Dendritic cell treated with granulocyte-macrophage colony-stimulating factor and Interleukin-4, amounts not matched to agents 40 ng/mL and 50 ng/mL, for 4 days (primary cell): ENCODE measurements at regions of chr2 and their contacts with region 1.

Region 1: GRCh38 chr2:32291746-32292145 is 14.0 kb downstream of the YIPF4 start:
- H3K4me3 Mint-ChIP-seq: no peak overlapping the region
- H3K27ac Mint-ChIP-seq: no peak overlapping the region
- H3K4me1 Mint-ChIP-seq: peaks cover 20% of the 10 kb centered on the region
- H3K27me3 Mint-ChIP-seq: no peaks in the 10 kb centered on the region

Region 2: GRCh38 chr2:32264422-32265105 is 27.2 kb before region 1 on chr2 and contains the start of gene NLRC4:
- intact Hi-C with region 1: loop called (anchors 5 kb)
- H3K4me3 Mint-ChIP-seq: peak within 1 kb of the TSS; percentile 74
- H3K27ac Mint-ChIP-seq: peak within 1 kb of the TSS; percentile 94
- H3K4me1 Mint-ChIP-seq: peaks cover 53% of the 10 kb centered on the region
- H3K27me3 Mint-ChIP-seq: no peaks in the 10 kb centered on the region

Region 3: GRCh38 chr2:32963941-32964340 is 672.2 kb after region 1 on chr2:
- intact Hi-C with region 1: no loop called
- H3K4me3 Mint-ChIP-seq: no peak overlapping the region
- H3K27ac Mint-ChIP-seq: no peak overlapping the region
- H3K4me1 Mint-ChIP-seq: no peaks in the 10 kb centered on the region
- H3K27me3 Mint-ChIP-seq: peaks cover 25% of the 10 kb centered on the region